ENCODE measurements at regions of chr11 and their contacts with region 1.

Region 1: DNA sequence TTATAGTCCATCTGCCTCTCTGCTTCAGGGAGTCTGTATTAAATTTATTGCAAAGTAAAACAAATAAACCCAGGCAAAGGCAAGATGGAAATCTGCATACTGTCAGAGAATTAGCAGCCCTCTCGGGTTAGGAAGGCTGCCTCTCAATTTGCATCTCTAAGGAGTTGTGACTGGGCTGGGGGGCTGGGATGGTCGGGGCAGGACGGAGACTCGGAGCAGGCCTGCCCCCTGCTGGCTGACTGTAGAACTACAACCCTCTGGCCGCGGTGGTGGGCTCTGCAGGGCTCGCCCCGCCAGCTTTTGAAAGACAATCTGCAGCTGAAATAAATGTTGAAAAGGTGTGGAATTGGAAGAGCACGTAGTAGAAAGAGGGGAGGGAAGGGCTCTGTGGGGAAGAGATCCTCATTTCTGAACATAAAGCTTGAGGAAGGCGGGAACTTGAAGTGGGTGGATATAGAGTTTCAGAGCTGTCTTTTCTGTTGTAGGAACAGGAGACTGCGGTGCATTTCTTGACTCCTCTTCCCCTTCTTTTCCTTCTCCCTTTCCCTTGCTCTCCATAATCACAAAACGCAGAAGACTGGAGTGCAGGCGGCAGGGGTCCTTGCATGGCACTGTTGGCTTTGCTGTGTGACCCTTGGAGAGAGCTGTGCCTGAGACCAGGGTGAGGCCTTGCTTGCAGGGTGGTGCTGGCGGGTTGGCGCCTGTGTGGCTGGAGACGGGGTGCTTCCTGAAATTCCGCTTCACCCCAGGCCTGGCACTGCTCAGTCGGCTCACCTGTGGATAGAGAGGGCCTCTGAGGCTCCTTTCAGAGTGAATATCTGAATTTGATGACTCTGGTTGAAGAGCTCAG is 22.6 kb upstream of the PKNOX2 start:
- DNase-seq: peak; percentile 12
- ATAC-seq: peak; percentile 88
- H3K4me3 ChIP-seq: no peak overlapping the region
- H3K27ac ChIP-seq: no peak overlapping the region
- H3K4me1 ChIP-seq: 0 out of 2 replicates have a peak, but pooled peaks cover 8% of the 10 kb centered on the region
- H3K27me3 ChIP-seq: peaks cover 9% of the 10 kb centered on the region
- CTCF ChIP-seq: peak; percentile 99

Region 2: DNA sequence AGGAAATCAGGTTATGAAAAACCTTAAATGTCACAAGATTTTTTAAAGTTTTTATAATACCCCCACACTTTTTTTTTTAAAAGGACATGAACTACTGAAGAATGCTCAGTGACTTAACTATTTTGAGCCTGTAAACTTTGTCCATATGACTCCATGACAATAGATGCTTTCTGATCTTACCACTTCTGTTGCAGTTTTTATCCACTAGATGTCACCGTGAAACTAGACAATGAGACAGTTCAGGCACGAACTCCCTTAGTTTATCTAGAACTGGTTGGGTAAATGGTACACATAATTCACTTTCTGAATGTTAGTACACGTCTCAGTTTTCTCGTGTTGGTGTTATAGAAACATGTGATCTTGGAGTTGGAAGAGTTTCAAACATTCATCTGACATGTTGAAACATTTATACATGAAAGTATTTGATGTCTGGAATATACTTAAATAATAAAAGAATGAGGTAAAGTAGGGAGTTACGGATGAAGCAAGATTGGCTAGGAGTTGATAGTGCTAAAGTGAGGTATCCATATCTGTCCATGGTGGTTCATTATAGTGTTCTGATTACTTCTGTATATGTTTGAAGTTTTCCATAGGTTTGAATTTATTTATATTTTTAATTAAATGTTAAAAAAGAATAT is 179.8 kb before region 1 on chr11:
- CTCF ChIA-PET with region 1: no interaction called
- POLR2A ChIA-PET with region 1: no interaction called
- in situ Hi-C with region 1: no loop called
- intact Hi-C with region 1: loop called (anchors 1 kb)
- DNase-seq: peak; percentile 78
- ATAC-seq: peak; percentile 99
- H3K4me3 ChIP-seq: no peak overlapping the region
- H3K27ac ChIP-seq: no peak overlapping the region
- H3K4me1 ChIP-seq: no peaks in the 10 kb centered on the region
- H3K27me3 ChIP-seq: no peaks in the 10 kb centered on the region
- CTCF ChIP-seq: peak; percentile 77; the same call in 1 of the 2 replicates

Region 3: DNA sequence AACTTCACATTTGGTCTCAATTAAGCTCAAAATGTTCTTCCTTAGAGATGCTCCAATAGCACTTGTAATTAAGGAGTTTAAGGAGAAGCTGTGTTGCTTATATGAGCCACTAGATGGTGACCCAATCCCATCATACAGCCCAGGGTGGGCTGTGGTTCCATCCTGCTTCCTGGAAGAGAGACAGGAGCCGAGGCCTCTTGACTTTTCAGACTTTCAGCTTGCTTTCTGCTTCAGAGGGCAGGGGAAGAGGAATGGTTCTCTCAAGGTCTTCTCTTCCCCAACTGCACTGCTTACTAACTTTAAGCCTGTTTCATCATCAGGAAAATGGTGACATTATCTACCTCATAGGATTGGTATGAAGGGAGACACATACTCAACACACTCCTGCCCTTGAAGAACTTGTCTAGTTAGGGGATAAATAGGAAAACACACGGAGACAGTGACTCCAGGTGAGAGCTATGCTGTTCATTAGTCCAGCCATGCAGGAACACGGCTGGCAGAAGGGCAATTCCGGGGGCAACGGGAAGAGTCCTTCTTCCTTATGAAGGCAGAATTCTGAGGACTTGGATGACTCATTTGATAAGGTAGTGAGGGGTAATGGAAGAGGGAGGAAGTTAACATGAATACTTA is 50.5 kb before region 1 on chr11:
- CTCF ChIA-PET with region 1: interaction called, 18 read pairs
- POLR2A ChIA-PET with region 1: no interaction called
- in situ Hi-C with region 1: no loop called
- intact Hi-C with region 1: loop called (anchors 1 kb)
- DNase-seq: peak; percentile 36
- ATAC-seq: peak; percentile 91
- H3K4me3 ChIP-seq: no peak overlapping the region
- H3K27ac ChIP-seq: no peak overlapping the region
- H3K4me1 ChIP-seq: no peaks in the 10 kb centered on the region
- H3K27me3 ChIP-seq: no peaks in the 10 kb centered on the region
- CTCF ChIP-seq: peak; percentile 85

Region 4: GRCh38 chr11:125180413-125181305 is 38.7 kb after region 1 on chr11:
- CTCF ChIA-PET with region 1: no interaction called
- POLR2A ChIA-PET with region 1: no interaction called
- in situ Hi-C with region 1: no loop called
- intact Hi-C with region 1: no loop called
- DNase-seq: no peak
- ATAC-seq: no peak
- H3K4me3 ChIP-seq: no peak overlapping the region
- H3K27ac ChIP-seq: no peak overlapping the region
- H3K4me1 ChIP-seq: no peaks in the 10 kb centered on the region
- H3K27me3 ChIP-seq: peaks cover 28% of the 10 kb centered on the region
- CTCF ChIP-seq: no peak

Measured in Panc1 (cell line).